CD4-positive, alpha-beta memory T cell (primary cell): ENCODE measurements at regions of chr2 and their contacts with region 1.

Region 1: GRCh38 chr2:64750817-64751285 is 97.1 kb upstream of the SERTAD2 start:
- DNase-seq: peak; percentile 96 to 99 (median 97)
- H3K4me3 ChIP-seq: peak overlapping the region; percentile 84 to 98
- H3K4me3 Mint-ChIP-seq: peak overlapping the region; percentile 98 to 99 (median 99)
- H3K27ac ChIP-seq: peak overlapping the region; percentile 93
- H3K27ac Mint-ChIP-seq: peak overlapping the region; percentile 91 to 98 (median 96)
- H3K4me1 ChIP-seq: peaks cover 20% of the 10 kb centered on the region
- H3K4me1 Mint-ChIP-seq: peaks cover 13 to 30% (median 23%) of the 10 kb centered on the region in 4 donors
- H3K27me3 ChIP-seq: no peaks in the 10 kb centered on the region
- H3K27me3 Mint-ChIP-seq: no peaks in the 10 kb centered on the region

Region 2: GRCh38 chr2:63841254-63842022 is 909.4 kb before region 1 on chr2 and contains the start of gene UGP2:
- CTCF ChIA-PET with region 1: no interaction called
- POLR2A ChIA-PET with region 1: no interaction called
- intact Hi-C with region 1: loop called (anchors 5 kb)
- DNase-seq: peak; percentile 82 to 94 (median 83)
- H3K4me3 ChIP-seq: peak within 1 kb of the TSS; percentile 63 to 85
- H3K4me3 Mint-ChIP-seq: peak within 1 kb of the TSS; percentile 96 to 100 (median 98)
- H3K27ac ChIP-seq: peak within 1 kb of the TSS; percentile 71
- H3K27ac Mint-ChIP-seq: peak within 1 kb of the TSS; percentile 95 to 100 (median 97)
- H3K4me1 ChIP-seq: peaks cover 44% of the 10 kb centered on the region
- H3K4me1 Mint-ChIP-seq: peaks cover 38 to 63% (median 51%) of the 10 kb centered on the region in 4 donors
- H3K27me3 ChIP-seq: no peaks in the 10 kb centered on the region
- H3K27me3 Mint-ChIP-seq: no peaks in the 10 kb centered on the region
- total RNA-seq, gene UGP2: 77.6 to 92.7 TPM

Region 3: GRCh38 chr2:64653349-64654062 is 97.3 kb before region 1 on chr2 and contains the start of gene SERTAD2:
- CTCF ChIA-PET with region 1: interaction called, 101 read pairs
- POLR2A ChIA-PET with region 1: interaction called, 298 read pairs
- intact Hi-C with region 1: loop called (anchors 1 kb)
- DNase-seq: peak; percentile 84 to 89 (median 88)
- H3K4me3 ChIP-seq: peak within 1 kb of the TSS; percentile 70 to 83
- H3K4me3 Mint-ChIP-seq: peak within 1 kb of the TSS; percentile 90 to 99 (median 92)
- H3K27ac ChIP-seq: peak within 1 kb of the TSS; percentile 83
- H3K27ac Mint-ChIP-seq: peak within 1 kb of the TSS; percentile 90 to 98 (median 95)
- H3K4me1 ChIP-seq: peaks cover 53% of the 10 kb centered on the region
- H3K4me1 Mint-ChIP-seq: peaks cover 34 to 63% (median 50%) of the 10 kb centered on the region in 4 donors
- H3K27me3 ChIP-seq: no peaks in the 10 kb centered on the region
- H3K27me3 Mint-ChIP-seq: no peaks in the 10 kb centered on the region
- total RNA-seq, gene SERTAD2: 23.5 to 24.6 TPM

Region 4: DNA sequence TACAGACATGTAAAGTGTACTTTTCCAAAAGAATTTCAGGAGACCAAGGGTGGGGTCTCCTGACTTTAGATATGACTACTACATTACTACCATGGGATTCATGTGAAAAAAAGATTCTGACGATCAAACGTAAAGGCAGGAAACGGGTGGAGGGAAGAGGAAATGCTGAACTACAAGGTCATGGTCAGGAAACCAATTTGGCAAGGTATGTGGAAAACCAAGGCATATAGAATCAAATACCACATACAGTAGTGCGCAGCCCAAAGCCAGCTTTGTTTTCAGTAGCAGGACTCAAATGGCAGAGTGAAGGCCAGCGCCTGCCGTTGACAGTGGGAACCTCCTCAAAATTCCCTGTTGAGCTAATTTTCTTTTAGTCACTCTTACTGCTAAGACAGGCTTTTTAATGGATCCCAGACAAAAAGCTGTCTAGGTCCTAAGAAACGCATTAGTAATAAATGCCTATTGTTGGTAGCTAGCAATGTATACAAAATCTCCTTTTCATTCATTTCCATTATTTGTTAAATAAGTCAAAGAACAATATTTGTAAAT is 39.5 kb before region 1 on chr2:
- CTCF ChIA-PET with region 1: no interaction called
- POLR2A ChIA-PET with region 1: interaction called, 12 read pairs
- intact Hi-C with region 1: no loop called
- DNase-seq: peak in 3 of 5 donors; percentile 6 to 18 (median 13)
- H3K4me3 ChIP-seq: no peak overlapping the region
- H3K4me3 Mint-ChIP-seq: peak overlapping the region in 7 of 8 donors; percentile 20 to 77 (median 56)
- H3K27ac ChIP-seq: no peak overlapping the region
- H3K27ac Mint-ChIP-seq: peak overlapping the region in 2 of 7 donors; percentile 14 to 59
- H3K4me1 ChIP-seq: peaks cover 13% of the 10 kb centered on the region
- H3K4me1 Mint-ChIP-seq: peaks cover 8 to 14% (median 10%) of the 10 kb centered on the region in 4 donors
- H3K27me3 ChIP-seq: no peaks in the 10 kb centered on the region
- H3K27me3 Mint-ChIP-seq: no peaks in the 10 kb centered on the region

Region 5: DNA sequence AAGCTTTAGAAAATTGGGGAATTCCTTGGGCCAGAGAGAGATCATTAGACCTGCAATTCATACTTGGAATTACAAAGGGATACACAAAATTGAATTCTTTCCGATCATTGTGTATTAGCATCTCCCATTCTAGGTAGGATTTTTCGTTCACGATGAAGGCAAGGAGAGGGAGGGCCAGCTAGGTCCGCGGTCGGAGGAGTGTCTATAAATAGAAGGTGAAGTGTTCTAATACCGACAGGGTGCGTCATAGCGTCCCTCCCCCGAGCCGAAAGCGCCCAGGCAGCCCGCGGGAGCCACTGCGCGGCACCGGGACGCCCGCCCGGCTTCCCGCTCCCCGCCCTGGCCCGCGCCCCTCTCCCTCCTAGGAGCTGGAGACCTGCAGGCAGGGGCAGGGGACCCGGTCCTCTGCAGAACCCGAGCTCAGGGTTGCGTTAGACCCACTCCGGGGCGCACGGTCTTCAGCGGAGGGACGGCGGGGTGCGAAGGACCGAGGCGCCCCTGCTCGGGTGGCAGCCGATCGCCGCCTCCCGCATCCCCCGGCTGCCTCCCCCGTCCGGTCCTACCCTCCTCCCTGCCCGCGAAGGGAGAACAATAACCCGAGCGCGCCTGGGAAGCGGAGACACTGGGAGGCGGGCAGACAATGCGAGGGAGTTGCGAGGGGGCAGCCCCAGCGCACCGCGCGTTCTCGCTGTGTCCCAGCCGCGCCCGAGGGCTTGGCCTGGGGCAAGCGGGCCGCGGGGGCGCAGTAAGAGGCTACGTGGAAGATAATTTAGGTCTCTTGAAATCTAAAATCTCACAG is 17.0 kb after region 1 on chr2:
- CTCF ChIA-PET with region 1: interaction called, 44 read pairs
- POLR2A ChIA-PET with region 1: interaction called, 71 read pairs
- intact Hi-C with region 1: loop called (anchors 1 kb)
- DNase-seq: peak; percentile 66 to 86 (median 69)
- H3K4me3 ChIP-seq: peak overlapping the region; percentile 47 to 72
- H3K4me3 Mint-ChIP-seq: peak overlapping the region; percentile 86 to 99 (median 94)
- H3K27ac ChIP-seq: peak overlapping the region; percentile 90
- H3K27ac Mint-ChIP-seq: peak overlapping the region; percentile 81 to 97 (median 96)
- H3K4me1 ChIP-seq: peaks cover 14% of the 10 kb centered on the region
- H3K4me1 Mint-ChIP-seq: peaks cover 12 to 23% (median 13%) of the 10 kb centered on the region in 4 donors
- H3K27me3 ChIP-seq: no peaks in the 10 kb centered on the region
- H3K27me3 Mint-ChIP-seq: no peaks in the 10 kb centered on the region

Region 6: DNA sequence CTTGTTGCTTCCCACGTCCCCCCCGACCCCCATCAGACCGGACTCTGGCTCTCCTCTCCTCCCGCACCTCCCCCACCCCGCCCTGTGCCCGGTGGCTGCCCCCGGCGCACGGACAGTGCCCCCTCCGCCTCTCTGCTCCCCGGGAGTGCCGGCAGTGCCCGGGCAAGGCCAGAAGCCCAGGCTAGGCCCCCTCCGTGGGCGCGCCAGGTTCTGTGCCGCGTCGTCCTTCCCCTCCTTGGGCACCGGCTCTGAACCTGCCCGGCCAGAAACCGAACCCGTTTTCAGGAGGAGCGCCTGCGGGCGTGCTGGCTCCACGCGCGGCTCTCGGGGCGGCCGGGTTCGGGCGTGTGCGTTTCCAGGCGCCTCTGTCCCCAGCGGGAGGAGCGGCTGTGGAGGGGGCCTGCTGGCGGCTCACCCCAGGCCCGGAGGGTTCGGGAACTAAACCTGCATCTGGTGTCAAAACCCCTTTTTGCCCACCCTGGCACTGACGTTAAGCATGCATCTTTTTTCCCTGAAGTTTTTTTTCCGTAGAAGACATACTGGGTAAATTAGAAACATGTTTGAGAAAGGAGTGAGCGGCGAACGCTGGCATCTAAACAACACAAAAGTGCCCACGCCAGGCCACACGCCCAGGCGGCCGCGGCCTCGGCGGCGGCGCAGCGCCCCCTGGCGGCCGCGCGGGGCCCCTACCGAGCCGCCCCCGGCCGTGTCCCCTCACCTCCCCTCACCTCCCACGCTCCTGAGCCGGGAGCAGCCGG is 114.4 kb after region 1 on chr2:
- CTCF ChIA-PET with region 1: no interaction called
- POLR2A ChIA-PET with region 1: interaction called, 3 read pairs
- intact Hi-C with region 1: loop called (anchors 1 kb)
- DNase-seq: peak in 4 of 5 donors; percentile 69 to 75 (median 70)
- H3K4me3 ChIP-seq: peak overlapping the region in 1 of 2 donors; percentile 60
- H3K4me3 Mint-ChIP-seq: peak overlapping the region; percentile 79 to 88 (median 82)
- H3K27ac ChIP-seq: no peak overlapping the region
- H3K27ac Mint-ChIP-seq: peak overlapping the region in 1 of 7 donors; percentile 64
- H3K4me1 ChIP-seq: peaks cover 10% of the 10 kb centered on the region
- H3K4me1 Mint-ChIP-seq: peaks cover 0 to 3% (median under 1%) of the 10 kb centered on the region in 4 donors
- H3K27me3 ChIP-seq: no peaks in the 10 kb centered on the region
- H3K27me3 Mint-ChIP-seq: peaks cover 2 to 3% of the 10 kb centered on the region in 2 donors